CD4-positive, alpha-beta memory T cell (primary cell): ENCODE measurements at regions of chr20 and their contacts with region 1.

Region 1: GRCh38 chr20:5950271-5951031 is at the starts of genes MCM8 and TRMT6:
- DNase-seq: peak; percentile 94 to 98 (median 95)
- H3K4me3 ChIP-seq: peak within 1 kb of the TSS; percentile 90 to 97
- H3K4me3 Mint-ChIP-seq: peak within 1 kb of the TSS; percentile 92 to 100 (median 98)
- H3K27ac ChIP-seq: peak within 1 kb of the TSS; percentile 73
- H3K27ac Mint-ChIP-seq: peak within 1 kb of the TSS; percentile 95 to 99 (median 99)
- H3K4me1 ChIP-seq: peaks cover 34% of the 10 kb centered on the region
- H3K4me1 Mint-ChIP-seq: peaks cover 28 to 39% (median 34%) of the 10 kb centered on the region in 4 donors
- H3K27me3 ChIP-seq: no peaks in the 10 kb centered on the region
- H3K27me3 Mint-ChIP-seq: peaks cover 1 to 2% of the 10 kb centered on the region in 2 donors
- total RNA-seq, gene MCM8: 10.2 to 11.1 TPM
- total RNA-seq, gene TRMT6: 17.9 to 18.3 TPM

Region 2: DNA sequence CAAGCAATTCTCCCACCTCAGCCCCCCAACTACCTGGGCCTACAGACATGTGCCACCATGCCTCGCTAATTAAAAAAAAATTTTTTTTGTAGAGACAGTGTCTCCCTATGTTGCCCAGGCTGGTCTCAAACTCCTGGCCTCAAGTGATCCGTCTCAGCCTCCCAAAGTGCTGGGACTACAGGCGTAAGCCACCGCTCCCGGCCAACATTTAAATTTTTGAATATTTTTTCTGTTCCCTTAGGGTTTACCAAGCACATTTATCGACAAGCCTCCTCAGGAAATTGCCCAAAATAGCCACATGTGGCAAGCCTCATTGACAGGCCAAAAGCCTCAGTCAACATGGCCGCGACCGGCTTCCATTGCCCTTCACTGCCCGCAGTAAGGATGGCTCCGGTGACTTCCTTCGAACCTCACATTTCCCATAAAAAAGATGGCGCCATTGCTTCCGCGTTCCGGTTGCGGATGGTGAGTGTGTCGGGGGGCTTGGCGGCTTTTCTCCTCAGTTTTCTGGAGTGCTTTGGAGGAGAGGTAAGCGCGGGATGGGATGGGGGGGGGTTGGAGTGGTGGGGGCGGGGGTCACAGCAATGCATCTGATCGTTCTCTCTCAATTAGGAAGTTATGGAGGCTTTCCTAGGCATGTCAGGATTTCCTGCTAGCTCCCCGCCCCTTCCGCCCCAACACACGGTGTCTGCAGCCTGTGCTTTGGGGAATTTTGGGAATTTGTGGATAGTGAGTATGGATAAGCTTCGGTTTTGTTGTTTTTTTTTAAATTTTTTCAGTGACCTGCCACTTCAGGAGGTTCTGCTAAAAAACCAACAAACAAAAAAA is 200.3 kb before region 1 on chr20 and contains the start of gene SHLD1:
- CTCF ChIA-PET with region 1: no interaction called
- POLR2A ChIA-PET with region 1: no interaction called
- intact Hi-C with region 1: loop called (anchors 1 kb)
- DNase-seq: peak; percentile 75 to 83 (median 81)
- H3K4me3 ChIP-seq: peak within 1 kb of the TSS; percentile 70 to 96
- H3K4me3 Mint-ChIP-seq: peak within 1 kb of the TSS; percentile 87 to 100 (median 96)
- H3K27ac ChIP-seq: peak within 1 kb of the TSS; percentile 69
- H3K27ac Mint-ChIP-seq: peak within 1 kb of the TSS; percentile 92 to 99 (median 98)
- H3K4me1 ChIP-seq: peaks cover 28% of the 10 kb centered on the region
- H3K4me1 Mint-ChIP-seq: peaks cover 16 to 34% (median 23%) of the 10 kb centered on the region in 4 donors
- H3K27me3 ChIP-seq: no peaks in the 10 kb centered on the region
- H3K27me3 Mint-ChIP-seq: no peaks in the 10 kb centered on the region
- total RNA-seq, gene SHLD1: 13.6 to 16.3 TPM

Region 3: GRCh38 chr20:5844063-5844681 is 106.3 kb before region 1 on chr20:
- CTCF ChIA-PET with region 1: no interaction called
- POLR2A ChIA-PET with region 1: no interaction called
- intact Hi-C with region 1: loop called (anchors 2 kb)
- DNase-seq: peak; percentile 23 to 79 (median 40)
- H3K4me3 ChIP-seq: no peak overlapping the region
- H3K4me3 Mint-ChIP-seq: peak overlapping the region; percentile 18 to 77 (median 72)
- H3K27ac ChIP-seq: peak overlapping the region; percentile 62
- H3K27ac Mint-ChIP-seq: peak overlapping the region; percentile 88 to 98 (median 93)
- H3K4me1 ChIP-seq: peaks cover 67% of the 10 kb centered on the region
- H3K4me1 Mint-ChIP-seq: peaks cover 53 to 69% (median 62%) of the 10 kb centered on the region in 4 donors
- H3K27me3 ChIP-seq: no peaks in the 10 kb centered on the region
- H3K27me3 Mint-ChIP-seq: no peaks in the 10 kb centered on the region

Region 4: GRCh38 chr20:6008254-6008653 is 57.8 kb after region 1 on chr20:
- CTCF ChIA-PET with region 1: interaction called, 4 read pairs
- POLR2A ChIA-PET with region 1: interaction called, 5 read pairs
- intact Hi-C with region 1: loop called (anchors 1 kb)
- DNase-seq: no peak
- H3K4me3 ChIP-seq: no peak overlapping the region
- H3K4me3 Mint-ChIP-seq: peak overlapping the region in 5 of 8 donors; percentile 13 to 99 (median 41)
- H3K27ac ChIP-seq: no peak overlapping the region
- H3K27ac Mint-ChIP-seq: peak overlapping the region in 3 of 7 donors; percentile 37 to 86 (median 72)
- H3K4me1 ChIP-seq: peaks cover 33% of the 10 kb centered on the region
- H3K4me1 Mint-ChIP-seq: peaks cover 28 to 57% (median 36%) of the 10 kb centered on the region in 4 donors
- H3K27me3 ChIP-seq: no peaks in the 10 kb centered on the region
- H3K27me3 Mint-ChIP-seq: no peaks in the 10 kb centered on the region

Region 5: GRCh38 chr20:6994452-6994851 is 1044.0 kb after region 1 on chr20:
- CTCF ChIA-PET with region 1: no interaction called
- POLR2A ChIA-PET with region 1: no interaction called
- intact Hi-C with region 1: no loop called
- DNase-seq: no peak
- H3K4me3 ChIP-seq: no peak overlapping the region
- H3K4me3 Mint-ChIP-seq: no peak overlapping the region
- H3K27ac ChIP-seq: no peak overlapping the region
- H3K27ac Mint-ChIP-seq: no peak overlapping the region
- H3K4me1 ChIP-seq: no peaks in the 10 kb centered on the region
- H3K4me1 Mint-ChIP-seq: no peaks in the 10 kb centered on the region
- H3K27me3 ChIP-seq: no peaks in the 10 kb centered on the region
- H3K27me3 Mint-ChIP-seq: no peaks in the 10 kb centered on the region